ENCODE measurements at regions of chr12 and their contacts with region 1.

Region 1: GRCh38 chr12:95117178-95117599 is 43.8 kb upstream of the NR2C1 start:
- DNase-seq: peak; percentile 63
- CTCF ChIP-seq: peak; percentile 54

Region 2: DNA sequence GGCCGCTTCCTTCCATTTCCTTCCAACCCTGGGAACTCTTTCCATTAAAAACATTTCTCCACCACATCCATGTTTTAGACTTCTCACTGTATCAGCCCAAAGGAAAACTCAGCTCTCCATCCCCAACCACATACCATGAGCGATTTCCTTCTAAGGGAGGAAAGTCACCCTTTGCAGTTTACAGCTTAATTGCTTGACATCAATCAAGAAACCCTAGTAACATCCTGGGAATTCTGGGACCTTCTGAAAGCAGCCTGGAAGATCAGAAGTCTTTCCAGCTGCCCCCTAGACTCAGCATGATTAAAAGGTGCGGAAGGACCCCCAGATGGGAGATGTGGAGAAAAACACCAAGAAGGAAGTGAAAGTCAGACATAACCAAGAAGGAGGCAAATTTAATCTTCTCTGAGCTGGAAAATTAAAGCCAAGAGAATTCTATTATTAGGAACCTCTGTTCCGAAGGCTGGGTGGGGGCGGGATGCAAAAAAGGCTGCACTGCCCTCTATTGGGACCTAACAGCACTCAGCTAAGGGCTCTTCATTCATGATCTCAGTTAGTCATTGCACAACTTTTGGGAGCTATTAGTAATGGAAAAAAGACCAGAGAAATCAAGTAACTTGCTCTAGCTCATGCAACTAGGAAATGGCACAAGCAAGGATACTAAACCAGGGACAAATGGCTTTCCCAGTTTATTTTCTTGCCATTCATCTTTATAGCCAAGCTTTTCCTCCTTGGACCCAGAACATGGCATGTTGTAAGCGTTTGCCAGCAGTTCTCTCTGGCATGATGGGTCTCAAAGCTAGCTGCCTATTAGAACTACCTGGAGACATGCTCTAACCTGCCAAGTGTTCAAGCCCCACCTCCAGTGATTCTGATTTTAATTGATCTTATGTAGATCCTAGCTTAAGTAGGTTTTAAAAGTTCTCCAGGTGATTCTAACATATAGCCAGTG is 1041.9 kb before region 1 on chr12:
- in situ Hi-C with region 1: no loop called
- DNase-seq: peak; percentile 25
- CTCF ChIP-seq: peak; percentile 51

Region 3: DNA sequence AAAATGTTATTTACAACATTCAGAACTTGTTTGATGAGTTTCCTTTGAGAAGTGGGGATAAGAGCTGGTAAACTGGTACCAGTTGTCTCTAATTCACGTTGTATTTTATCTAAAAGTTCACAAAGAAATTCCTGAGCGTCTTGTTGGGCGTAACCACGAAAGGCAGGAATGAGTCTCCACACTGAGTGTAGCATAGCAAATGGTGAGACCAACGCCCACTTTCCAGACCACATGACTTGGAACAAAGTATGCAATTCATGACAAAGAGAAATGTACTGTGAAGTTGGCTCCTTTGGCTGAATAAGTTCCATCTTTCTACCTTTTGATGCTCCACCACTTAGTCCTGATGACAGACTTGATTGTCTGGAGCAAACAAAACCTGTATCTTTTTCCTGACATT is 415.7 kb after region 1 on chr12:
- in situ Hi-C with region 1: loop called (anchors 10 kb)
- DNase-seq: no peak
- CTCF ChIP-seq: no peak